GM18951 (cell line): ENCODE measurements at regions of chr7 and their contacts with region 1.

Region 1: DNA sequence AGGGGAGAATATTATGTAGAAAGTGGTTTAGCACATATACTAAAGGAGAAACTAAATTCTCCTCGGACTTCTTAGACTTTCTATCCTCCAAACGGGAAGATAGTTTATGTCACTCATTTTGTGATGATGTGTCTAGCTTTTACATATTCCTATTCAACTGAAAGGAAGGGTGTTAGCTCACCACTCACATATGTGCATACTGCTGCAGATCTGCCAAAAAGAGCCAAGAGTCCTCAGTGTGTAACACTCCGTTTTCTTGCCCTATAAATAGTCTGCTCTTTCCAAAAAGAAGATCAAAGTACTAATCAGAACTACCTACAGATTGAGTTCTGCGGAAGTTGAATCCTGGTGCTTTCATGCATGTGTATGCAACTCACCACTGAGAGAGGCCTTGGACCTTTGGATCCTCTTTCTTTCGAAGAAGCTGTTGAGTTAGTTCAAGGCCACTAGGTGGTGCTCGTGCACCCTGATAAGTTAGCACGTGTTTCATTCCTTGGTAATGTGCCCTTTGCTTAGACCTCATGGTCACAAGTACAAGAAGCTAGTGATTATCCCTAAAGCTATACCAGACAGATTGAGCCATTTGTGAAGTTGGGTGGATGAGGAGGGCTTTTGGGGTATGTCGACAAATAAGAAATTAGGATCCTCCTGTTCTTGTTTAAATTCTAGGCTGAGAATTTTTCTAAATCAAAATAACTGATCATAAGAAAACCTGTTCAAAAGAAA is 14.1 kb downstream of the YAE1 start:
- POLR2A ChIP-seq: no peak

Region 2: GRCh38 chr7:39741942-39742623 is 161.8 kb after region 1 on chr7:
- in situ Hi-C with region 1: loop called (anchors 5 kb)
- POLR2A ChIP-seq: no peak

Region 3: GRCh38 chr7:40057292-40057691 is 477.0 kb after region 1 on chr7:
- in situ Hi-C with region 1: loop called (anchors 25 kb)
- POLR2A ChIP-seq: no peak